Activated CD8-positive, alpha-beta T cell treated with anti-CD3 and anti-CD28 coated beads, Interleukin-2, amount 10 ng/mL, durations not matched to agents 7 days and 5 days (primary cell): ENCODE measurements at regions of chr5 and their contacts with region 1.

Region 1: GRCh38 chr5:81105261-81105877 is 127.8 kb upstream of the CKMT2 start:
- DNase-seq: no peak
- ATAC-seq: peak; percentile 67
- H3K4me3 Mint-ChIP-seq: peak overlapping the region; percentile 32
- H3K27ac Mint-ChIP-seq: no peak overlapping the region
- H3K4me1 Mint-ChIP-seq: peaks cover 32% of the 10 kb centered on the region
- H3K27me3 Mint-ChIP-seq: no peaks in the 10 kb centered on the region

Region 2: GRCh38 chr5:80754900-80755299 is 350.5 kb before region 1 on chr5:
- CTCF ChIA-PET with region 1: interaction called, 14 read pairs
- POLR2A ChIA-PET with region 1: no interaction called
- DNase-seq: peak; percentile 37
- ATAC-seq: peak; percentile 16
- H3K4me3 Mint-ChIP-seq: peak overlapping the region; percentile 61
- H3K27ac Mint-ChIP-seq: peak overlapping the region; percentile 93
- H3K4me1 Mint-ChIP-seq: peaks cover 64% of the 10 kb centered on the region
- H3K27me3 Mint-ChIP-seq: no peaks in the 10 kb centered on the region

Region 3: DNA sequence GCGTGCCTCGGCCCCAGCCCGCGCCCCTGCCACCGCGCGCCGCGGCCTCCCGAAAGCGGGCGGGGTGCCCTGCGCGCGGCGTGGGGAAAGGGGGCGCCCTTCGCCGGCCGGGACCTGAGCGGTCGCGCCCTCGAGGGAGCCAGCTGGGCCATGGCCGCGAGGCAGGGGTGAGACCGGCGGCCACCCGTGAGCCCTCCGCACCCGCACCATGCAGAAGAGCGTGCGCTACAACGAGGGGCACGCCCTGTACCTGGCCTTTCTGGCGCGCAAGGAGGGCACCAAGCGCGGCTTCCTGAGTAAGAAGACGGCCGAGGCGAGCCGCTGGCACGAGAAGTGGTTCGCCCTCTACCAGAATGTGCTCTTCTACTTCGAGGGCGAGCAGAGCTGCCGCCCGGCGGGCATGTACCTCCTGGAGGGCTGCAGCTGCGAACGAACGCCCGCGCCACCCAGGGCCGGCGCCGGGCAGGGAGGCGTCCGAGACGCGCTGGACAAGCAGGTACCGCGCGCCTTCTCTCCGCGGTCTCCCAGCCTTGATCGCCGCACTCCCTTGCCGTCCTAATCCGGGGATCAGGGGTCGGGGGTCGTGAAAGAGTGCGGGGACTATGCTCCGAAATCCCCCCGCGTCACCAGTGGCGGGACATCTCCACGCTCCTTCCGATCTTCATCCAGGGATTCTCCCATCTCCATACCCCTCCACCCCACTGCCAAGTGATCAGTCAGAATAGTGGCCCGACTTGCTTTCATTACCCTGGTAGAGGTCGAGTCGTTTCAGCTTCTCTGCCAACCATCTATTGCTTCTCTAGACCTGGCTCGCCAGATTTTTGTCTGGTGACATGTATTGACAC is 144.6 kb before region 1 on chr5:
- CTCF ChIA-PET with region 1: interaction called, 10 read pairs
- POLR2A ChIA-PET with region 1: no interaction called
- DNase-seq: peak; percentile 60
- ATAC-seq: peak; percentile 69
- H3K4me3 Mint-ChIP-seq: peak overlapping the region; percentile 85
- H3K27ac Mint-ChIP-seq: peak overlapping the region; percentile 79
- H3K4me1 Mint-ChIP-seq: peaks cover 63% of the 10 kb centered on the region
- H3K27me3 Mint-ChIP-seq: peaks cover 5% of the 10 kb centered on the region

Region 4: DNA sequence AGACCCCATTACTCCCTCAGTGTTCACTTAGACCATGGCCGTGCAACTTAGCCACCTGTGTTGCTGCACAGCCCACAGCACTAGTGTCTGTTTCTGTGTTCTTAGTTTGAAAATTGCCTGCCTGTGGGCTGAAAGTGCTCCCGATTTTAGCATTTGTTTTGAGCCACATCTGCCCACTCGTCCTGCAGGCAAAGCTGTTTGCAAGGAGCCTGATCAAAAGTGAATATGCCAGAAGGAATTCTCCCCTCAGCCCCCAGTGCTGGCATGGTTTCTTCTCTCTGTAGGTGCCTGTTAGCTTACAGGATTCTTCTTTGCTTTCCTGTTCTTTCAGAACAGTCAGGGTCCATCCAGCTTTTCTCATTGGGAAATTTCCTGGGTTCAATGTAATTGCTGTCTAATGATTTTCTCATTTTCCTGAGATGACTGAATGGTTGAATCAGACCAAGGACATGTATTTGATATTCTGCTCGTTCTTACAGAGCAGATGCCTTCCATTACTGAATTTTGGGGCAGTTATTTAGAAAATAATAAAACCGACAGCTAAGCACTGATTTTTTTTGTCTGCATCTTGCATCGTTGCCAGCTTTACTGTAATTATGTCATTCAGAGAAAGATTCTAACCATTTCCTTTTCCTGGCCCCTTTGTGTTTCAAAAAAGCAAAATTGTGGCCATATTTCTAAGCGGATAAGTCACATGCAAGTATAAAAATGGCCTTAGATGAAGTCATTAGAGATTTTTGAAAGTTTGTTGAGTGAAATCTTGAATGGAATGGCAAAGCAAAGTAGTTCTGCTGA is 16.7 kb after region 1 on chr5:
- CTCF ChIA-PET with region 1: interaction called, 14 read pairs
- POLR2A ChIA-PET with region 1: no interaction called
- DNase-seq: no peak
- ATAC-seq: no peak
- H3K4me3 Mint-ChIP-seq: no peak overlapping the region
- H3K27ac Mint-ChIP-seq: peak overlapping the region; percentile 1
- H3K4me1 Mint-ChIP-seq: peaks cover 15% of the 10 kb centered on the region
- H3K27me3 Mint-ChIP-seq: no peaks in the 10 kb centered on the region